ENCODE measurements at regions of chr1 and their contacts with region 1.

Region 1: GRCh38 chr1:12619792-12620487 is 1.9 kb upstream of the DHRS3 start:
- DNase-seq: peak; percentile 92

Region 2: DNA sequence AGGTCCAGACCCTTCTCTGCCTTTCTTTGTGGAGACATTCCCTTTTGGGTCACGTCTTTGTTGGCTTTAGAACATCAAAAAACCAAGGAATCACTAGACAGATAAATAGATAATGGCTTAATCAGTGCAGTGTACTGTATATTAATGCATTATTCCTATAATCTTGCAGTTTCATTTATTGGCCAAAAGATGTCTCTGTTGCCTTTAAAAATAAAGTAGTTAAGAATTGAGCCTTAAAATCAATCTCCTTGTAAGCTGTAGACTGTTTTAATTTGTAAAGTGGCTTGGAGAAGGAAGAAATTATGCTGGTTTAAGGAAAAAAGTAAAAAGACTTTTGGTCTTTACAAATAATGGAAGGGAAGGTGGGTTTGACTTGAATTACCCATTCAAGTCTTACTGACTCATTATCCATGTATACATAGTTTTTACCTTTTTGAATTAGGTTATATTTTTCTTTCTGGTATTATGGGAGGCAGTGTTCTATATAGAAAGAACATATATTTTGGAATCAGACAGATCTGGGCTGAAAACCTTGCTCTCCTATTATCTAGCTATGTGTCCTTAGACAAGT is 305.5 kb before region 1 on chr1:
- intact Hi-C with region 1: loop called (anchors 1 kb)
- DNase-seq: no peak

Region 3: GRCh38 chr1:12407050-12407961 is 212.6 kb before region 1 on chr1:
- intact Hi-C with region 1: loop called (anchors 1 kb)
- DNase-seq: no peak

Region 4: GRCh38 chr1:12464598-12465056 is 155.3 kb before region 1 on chr1:
- intact Hi-C with region 1: loop called (anchors 5 kb)
- DNase-seq: no peak

Region 5: GRCh38 chr1:12556368-12556930 is 63.5 kb before region 1 on chr1:
- intact Hi-C with region 1: loop called (anchors 2 kb)
- DNase-seq: no peak

Region 6: GRCh38 chr1:12658531-12659453 is 38.9 kb after region 1 on chr1:
- intact Hi-C with region 1: loop called (anchors 1 kb)
- DNase-seq: peak; percentile 83

Measured in cardiac septum (tissue), 1 donor.